Sigmoid colon (tissue), 7 donors: ENCODE measurements at regions of chrX and their contacts with region 1.

Region 1: GRCh38 chrX:57595381-57595811 is 3.6 kb downstream of the ZXDB start:
- DNase-seq: peak; percentile 69
- H3K4me3 ChIP-seq: peak overlapping the region in 2 of 4 donors; percentile 3 to 15
- H3K27ac ChIP-seq: peak overlapping the region; percentile 39 to 70 (median 58)
- H3K4me1 ChIP-seq: peaks cover 0 to 43% (median 21%) of the 10 kb centered on the region in 4 donors
- H3K27me3 ChIP-seq: no peaks in the 10 kb centered on the region
- CTCF ChIP-seq: no peak
- EP300 ChIP-seq: no peak
- POLR2A ChIP-seq: no peak

Region 2: DNA sequence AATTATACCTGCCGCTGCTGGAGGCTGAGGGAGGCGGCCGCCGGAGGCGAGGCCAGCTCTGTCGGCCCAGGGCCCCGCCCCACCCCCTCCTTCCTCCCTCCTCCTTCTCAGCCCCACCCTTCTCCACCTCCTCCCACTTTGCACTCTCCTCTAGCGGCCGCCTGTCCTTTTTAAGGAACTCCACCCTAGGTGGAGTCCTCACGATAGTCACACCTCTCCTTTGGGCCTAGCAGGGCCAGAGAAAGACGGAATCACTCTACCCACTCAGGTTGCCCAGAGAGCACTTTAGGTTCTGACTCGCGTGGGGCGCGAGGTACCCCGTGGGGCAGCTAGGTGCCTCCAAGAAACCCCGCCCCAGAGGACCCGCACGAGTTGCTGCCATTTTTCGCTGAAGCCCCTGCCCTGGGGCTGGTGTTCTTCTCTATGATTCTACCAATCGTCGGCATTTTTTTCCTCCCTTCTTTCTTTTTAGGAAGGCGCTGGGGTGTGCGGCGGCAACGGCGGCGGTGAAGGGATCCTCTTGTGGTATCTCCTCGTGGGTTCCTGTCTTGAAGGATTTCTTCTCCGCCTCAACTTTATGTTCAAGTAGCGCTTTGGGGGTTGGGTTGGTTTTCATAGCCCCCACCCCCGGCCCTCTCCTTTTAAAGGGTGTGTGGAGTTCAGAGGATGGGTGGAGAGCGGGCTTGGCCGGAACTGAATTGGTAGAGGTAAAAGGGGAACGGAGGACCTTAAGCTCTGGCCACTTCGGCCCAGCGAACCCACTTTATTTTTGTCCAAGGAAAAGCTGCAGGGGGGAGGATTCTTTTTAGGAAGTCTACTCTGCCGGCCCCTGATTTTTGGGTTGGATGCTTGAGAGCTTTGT is 1362.9 kb before region 1 on chrX and contains the start of gene KLF8:
- intact Hi-C with region 1: loop called (anchors 10 kb)
- DNase-seq: peak; percentile 76
- H3K4me3 ChIP-seq: peak within 1 kb of the TSS; percentile 34 to 56 (median 52)
- H3K27ac ChIP-seq: peak within 1 kb of the TSS; percentile 83 to 87 (median 84)
- H3K4me1 ChIP-seq: peaks cover 0 to 10% (median 0%) of the 10 kb centered on the region in 4 donors
- H3K27me3 ChIP-seq: no peaks in the 10 kb centered on the region
- CTCF ChIP-seq: no peak
- EP300 ChIP-seq: no peak
- POLR2A ChIP-seq: peak in 1 of 2 donors; percentile 25
- total RNA-seq, gene KLF8: 9.1 to 19.7 (median 10.4) TPM

Region 3: GRCh38 chrX:56995271-56995994 is 600.0 kb before region 1 on chrX and contains the start of gene SPIN3:
- intact Hi-C with region 1: loop called (anchors 10 kb)
- DNase-seq: peak; percentile 89
- H3K4me3 ChIP-seq: peak within 1 kb of the TSS; percentile 60 to 65 (median 62)
- H3K27ac ChIP-seq: peak within 1 kb of the TSS; percentile 73 to 81 (median 78)
- H3K4me1 ChIP-seq: peaks cover 0 to 11% (median 0%) of the 10 kb centered on the region in 4 donors
- H3K27me3 ChIP-seq: no peaks in the 10 kb centered on the region
- CTCF ChIP-seq: no peak
- EP300 ChIP-seq: no peak
- POLR2A ChIP-seq: peak in 1 of 2 donors; percentile 17
- total RNA-seq, gene SPIN3: 6.5 to 16.9 (median 9.3) TPM

Region 4: GRCh38 chrX:57445046-57445445 is 150.3 kb before region 1 on chrX:
- intact Hi-C with region 1: no loop called
- DNase-seq: no peak
- H3K4me3 ChIP-seq: no peak overlapping the region
- H3K27ac ChIP-seq: no peak overlapping the region
- H3K4me1 ChIP-seq: no peaks in the 10 kb centered on the region
- H3K27me3 ChIP-seq: no peaks in the 10 kb centered on the region
- CTCF ChIP-seq: no peak
- EP300 ChIP-seq: no peak
- POLR2A ChIP-seq: no peak

Region 5: DNA sequence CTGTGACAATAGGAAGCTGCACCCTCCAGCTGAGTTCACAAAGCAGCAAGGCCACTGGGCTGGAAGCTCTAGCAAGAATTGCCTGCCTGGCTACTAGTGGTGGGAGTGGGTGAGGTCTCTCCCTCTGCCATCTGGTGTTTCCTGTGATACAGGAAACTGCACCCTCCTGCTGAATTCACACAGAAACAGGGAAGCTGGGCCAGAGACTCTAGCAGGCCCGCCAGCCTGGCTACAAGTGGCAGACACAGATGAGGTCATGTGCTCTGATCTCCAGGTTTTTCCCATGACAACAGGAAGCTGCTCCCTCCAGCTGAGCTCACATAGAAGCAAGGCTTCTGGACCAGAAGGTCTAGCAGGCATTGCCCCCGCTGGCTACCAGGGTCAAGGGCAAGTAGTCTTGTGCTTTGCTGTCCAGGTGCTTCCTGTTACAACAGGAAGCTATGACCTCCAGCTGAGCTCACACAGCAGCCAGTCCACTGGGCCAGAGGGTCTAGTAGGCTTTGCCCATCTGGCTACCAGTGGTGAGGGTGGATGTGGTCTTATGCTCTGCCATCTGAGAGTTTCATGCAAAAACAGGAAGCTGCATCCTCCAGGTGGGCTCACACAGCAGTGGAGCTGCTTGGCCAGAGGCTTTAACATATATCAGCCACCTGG is 356.4 kb after region 1 on chrX:
- intact Hi-C with region 1: no loop called
- DNase-seq: peak; percentile 65
- H3K4me3 ChIP-seq: no peak overlapping the region
- H3K27ac ChIP-seq: peak overlapping the region in 1 of 4 donors; percentile 14
- H3K4me1 ChIP-seq: no peaks in the 10 kb centered on the region
- H3K27me3 ChIP-seq: no peaks in the 10 kb centered on the region
- CTCF ChIP-seq: no peak
- EP300 ChIP-seq: no peak
- POLR2A ChIP-seq: no peak